ENCODE measurements at regions of chr9 and their contacts with region 1.

Region 1: DNA sequence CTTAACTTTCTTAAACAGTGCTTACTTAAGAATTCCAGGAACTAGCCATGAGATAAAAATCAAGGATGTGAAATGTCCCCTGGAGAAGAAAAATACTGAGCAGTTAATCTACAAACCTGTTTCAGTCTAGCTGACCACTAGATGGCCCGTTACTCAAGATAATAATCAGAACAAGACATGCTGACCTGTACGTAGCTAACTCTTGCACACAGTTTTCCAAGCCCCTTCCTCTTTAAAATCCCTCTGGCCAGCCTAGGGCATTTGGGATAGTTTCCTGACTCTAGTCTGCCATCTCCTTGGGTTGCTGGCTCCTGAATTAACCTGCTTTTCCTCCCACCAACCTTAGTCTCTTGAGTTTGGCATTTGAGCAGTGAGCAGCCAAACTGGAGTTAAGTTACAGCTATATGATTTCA is 59.2 kb upstream of the TRAF1 start:
- DNase-seq: peak; percentile 58
- H3K4me3 ChIP-seq: no peak overlapping the region
- H3K27ac ChIP-seq: no peak overlapping the region
- H3K4me1 ChIP-seq: peaks cover 5% of the 10 kb centered on the region
- H3K27me3 ChIP-seq: no peaks in the 10 kb centered on the region
- CTCF ChIP-seq: peak in 3 of 4 experiments; percentile 60 to 75 (median 61)
- POLR2A ChIP-seq: no peak

Region 2: GRCh38 chr9:121038804-121039203 is 53.0 kb after region 1 on chr9:
- intact Hi-C with region 1: no loop called
- DNase-seq: no peak
- H3K4me3 ChIP-seq: no peak overlapping the region
- H3K27ac ChIP-seq: no peak overlapping the region
- H3K4me1 ChIP-seq: no peaks in the 10 kb centered on the region
- H3K27me3 ChIP-seq: no peaks in the 10 kb centered on the region
- CTCF ChIP-seq: no peak
- POLR2A ChIP-seq: no peak

Region 3: GRCh38 chr9:121067640-121068039 is 81.8 kb after region 1 on chr9:
- intact Hi-C with region 1: loop called (anchors 5 kb)
- DNase-seq: no peak
- H3K4me3 ChIP-seq: no peak overlapping the region
- H3K27ac ChIP-seq: no peak overlapping the region
- H3K4me1 ChIP-seq: no peaks in the 10 kb centered on the region
- H3K27me3 ChIP-seq: no peaks in the 10 kb centered on the region
- CTCF ChIP-seq: no peak
- POLR2A ChIP-seq: no peak